ENCODE measurements at regions of chr13 and their contacts with region 1.

Region 1: GRCh38 chr13:46553886-46554858 is 1.2 kb downstream of the LRCH1 start:
- DNase-seq: peak; percentile 83
- ATAC-seq: peak; percentile 82

Region 2: GRCh38 chr13:46403851-46404732 is 150.1 kb before region 1 on chr13:
- intact Hi-C with region 1: no loop called
- DNase-seq: no peak
- ATAC-seq: peak; percentile 84

Region 3: DNA sequence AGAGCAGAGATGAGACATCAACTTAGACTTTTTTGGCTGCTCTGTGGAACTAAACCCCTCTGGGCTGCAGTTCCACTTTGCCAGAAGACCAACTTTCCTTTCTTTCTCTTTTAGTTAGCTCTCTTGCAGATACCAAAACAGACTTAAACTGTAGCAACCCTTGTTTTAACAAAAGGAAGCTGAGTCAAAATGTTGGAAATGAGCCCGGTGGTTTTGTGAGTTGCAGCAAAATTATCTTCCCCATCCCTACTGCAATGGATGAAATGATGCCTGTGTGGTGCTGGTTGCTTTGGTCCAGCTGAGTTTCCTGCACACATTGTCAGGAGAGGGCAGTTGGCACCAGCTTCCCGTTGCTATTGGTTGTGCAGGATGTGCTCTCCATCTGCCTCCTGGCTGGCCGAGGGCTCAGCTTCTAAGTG is 114.1 kb after region 1 on chr13:
- intact Hi-C with region 1: no loop called
- DNase-seq: peak; percentile 62
- ATAC-seq: peak; percentile 59

Region 4: GRCh38 chr13:46679369-46680120 is 125.4 kb after region 1 on chr13:
- intact Hi-C with region 1: loop called (anchors 10 kb)
- DNase-seq: no peak
- ATAC-seq: peak; percentile 72